ENCODE measurements at regions of chr9 and their contacts with region 1.

Region 1: DNA sequence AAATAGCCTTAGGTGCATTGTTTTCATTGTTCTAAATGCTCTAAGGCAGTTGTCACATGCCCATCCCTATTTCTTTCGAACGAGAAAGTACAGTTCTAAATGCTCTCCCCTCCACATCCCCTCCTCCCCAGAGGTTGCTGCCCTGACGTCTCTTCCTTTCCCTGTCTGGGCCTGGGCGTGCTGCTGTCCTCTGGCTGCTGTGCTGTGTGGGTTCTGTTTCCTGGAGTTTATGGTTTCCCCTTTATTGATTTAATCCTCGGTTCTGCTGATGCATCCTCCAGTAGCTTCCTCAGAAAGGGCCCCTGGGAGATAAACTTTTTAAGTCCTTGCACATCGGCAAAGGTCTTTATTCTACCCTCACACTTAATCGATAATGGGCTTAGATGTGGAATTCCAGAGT is 48.8 kb downstream of the MVB12B start:
- DNase-seq: peak in 3 of 10 donors; percentile 43 to 90 (median 59)

Region 2: GRCh38 chr9:126307322-126308061 is 67.9 kb before region 1 on chr9:
- intact Hi-C with region 1: loop called (anchors 5 kb)
- DNase-seq: peak; percentile 65 to 97 (median 81)

Region 3: GRCh38 chr9:126334721-126335621 is 40.4 kb before region 1 on chr9:
- intact Hi-C with region 1: loop called (anchors 5 kb)
- DNase-seq: peak in 1 of 10 donors; percentile 74

Measured in posterior cingulate gyrus (tissue), 11 donors.